Activated T-helper 1 cell treated with anti-CD3 and anti-CD28 coated beads, Interleukin-12 subunit alpha, Interleukin-12 subunit beta, Interleukin-2, Interleukin-4 antibody, amounts not matched to agents 30 ng/mL and 10 ng/mL and 1 ng/mL, durations not matched to agents 14 hours and 24 hours and 36 hours (primary cell): ENCODE measurements at regions of chr6 and their contacts with region 1.

Region 1: GRCh38 chr6:135651964-135652755 is 154.6 kb upstream of the AHI1 start:
- DNase-seq: no peak
- H3K4me3 Mint-ChIP-seq: peak overlapping the region; percentile 57
- H3K27ac Mint-ChIP-seq: peak overlapping the region; percentile 91
- H3K4me1 Mint-ChIP-seq: peaks cover 44% of the 10 kb centered on the region
- H3K27me3 Mint-ChIP-seq: no peaks in the 10 kb centered on the region

Region 2: GRCh38 chr6:135693811-135694370 is 41.7 kb after region 1 on chr6:
- intact Hi-C with region 1: loop called (anchors 5 kb)
- DNase-seq: no peak
- H3K4me3 Mint-ChIP-seq: no peak overlapping the region
- H3K27ac Mint-ChIP-seq: no peak overlapping the region
- H3K4me1 Mint-ChIP-seq: peaks cover 27% of the 10 kb centered on the region
- H3K27me3 Mint-ChIP-seq: peaks cover 7% of the 10 kb centered on the region